ENCODE measurements at regions of chr10 and their contacts with region 1.

Region 1: DNA sequence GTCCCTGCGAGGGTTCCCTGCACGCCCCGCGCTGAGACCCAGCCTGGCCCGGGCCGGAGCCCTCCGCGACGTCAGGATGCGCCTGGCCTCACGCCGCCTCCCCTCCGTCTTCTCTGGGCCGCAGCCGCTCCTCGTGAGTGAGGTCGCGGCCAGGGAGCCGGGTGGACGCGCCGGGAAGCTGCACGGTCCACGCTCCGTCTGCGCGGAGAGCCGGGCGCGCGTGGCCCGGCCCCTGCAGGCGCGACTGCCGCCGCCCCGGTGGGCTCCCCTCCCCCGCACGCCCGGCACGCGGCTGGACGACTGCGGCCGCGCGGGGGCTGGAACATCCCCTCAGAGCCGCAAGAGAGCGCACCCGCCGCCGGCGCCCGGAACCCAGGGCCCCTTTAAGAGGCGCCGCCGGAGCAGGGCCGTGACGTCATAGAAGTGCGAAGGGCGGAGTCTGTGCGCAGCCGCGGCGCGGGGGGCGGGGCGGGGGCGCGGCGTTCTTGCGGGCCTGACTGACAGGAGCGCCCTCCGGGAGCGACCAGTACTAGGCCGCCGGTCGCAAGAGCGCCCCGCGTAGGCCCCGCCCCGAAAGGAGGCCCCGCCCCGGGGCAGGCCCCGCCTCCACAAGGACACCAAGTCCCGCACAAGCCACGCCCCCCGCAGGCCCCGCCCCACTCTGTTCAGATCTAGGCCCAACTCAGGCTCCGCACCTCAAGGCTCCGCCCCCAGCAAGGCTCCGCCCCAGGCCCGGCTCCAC is 445 bp upstream of the INPP5A start:
- DNase-seq: peak; percentile 100
- H3K4me3 ChIP-seq: peak overlapping the region; percentile 84
- H3K27ac ChIP-seq: peak overlapping the region; percentile 75 to 90
- H3K4me1 ChIP-seq: peaks cover 20% of the 10 kb centered on the region
- H3K27me3 ChIP-seq: no peaks in the 10 kb centered on the region
- CTCF ChIP-seq: peak; percentile 34 to 76 (median 76)
- EP300 ChIP-seq: peak; percentile 60
- POLR2A ChIP-seq: peak; percentile 62

Region 2: DNA sequence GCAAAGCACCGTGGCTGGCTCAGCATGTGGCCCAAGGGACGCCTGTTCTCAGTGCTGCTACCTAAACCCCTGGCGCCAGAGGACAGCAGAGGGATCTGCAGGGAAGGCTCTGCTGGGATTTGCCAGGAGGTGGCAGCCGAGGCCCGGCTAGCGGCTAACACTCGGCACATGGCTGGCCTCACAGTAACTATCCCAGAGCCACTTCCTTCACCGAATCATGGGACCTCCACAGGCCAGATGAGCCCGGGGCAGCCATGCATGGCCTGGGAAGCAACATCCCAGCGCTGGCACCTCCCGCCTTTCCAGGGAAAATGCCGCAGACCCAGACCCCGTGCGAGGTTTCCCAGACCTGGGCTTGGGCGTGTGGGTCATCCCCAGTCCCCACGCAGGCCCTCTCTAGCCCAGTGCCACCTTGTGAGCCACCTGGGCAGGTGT is 314.0 kb before region 1 on chr10:
- intact Hi-C with region 1: loop called in 1 of 4 experiments (anchors 10 kb)
- DNase-seq: peak; percentile 68 to 85 (median 81)
- H3K4me3 ChIP-seq: no peak overlapping the region
- H3K27ac ChIP-seq: no peak overlapping the region
- H3K4me1 ChIP-seq: no peaks in the 10 kb centered on the region
- H3K27me3 ChIP-seq: no peaks in the 10 kb centered on the region
- CTCF ChIP-seq: peak; percentile 82 to 91 (median 84)
- EP300 ChIP-seq: no peak
- POLR2A ChIP-seq: no peak

Region 3: DNA sequence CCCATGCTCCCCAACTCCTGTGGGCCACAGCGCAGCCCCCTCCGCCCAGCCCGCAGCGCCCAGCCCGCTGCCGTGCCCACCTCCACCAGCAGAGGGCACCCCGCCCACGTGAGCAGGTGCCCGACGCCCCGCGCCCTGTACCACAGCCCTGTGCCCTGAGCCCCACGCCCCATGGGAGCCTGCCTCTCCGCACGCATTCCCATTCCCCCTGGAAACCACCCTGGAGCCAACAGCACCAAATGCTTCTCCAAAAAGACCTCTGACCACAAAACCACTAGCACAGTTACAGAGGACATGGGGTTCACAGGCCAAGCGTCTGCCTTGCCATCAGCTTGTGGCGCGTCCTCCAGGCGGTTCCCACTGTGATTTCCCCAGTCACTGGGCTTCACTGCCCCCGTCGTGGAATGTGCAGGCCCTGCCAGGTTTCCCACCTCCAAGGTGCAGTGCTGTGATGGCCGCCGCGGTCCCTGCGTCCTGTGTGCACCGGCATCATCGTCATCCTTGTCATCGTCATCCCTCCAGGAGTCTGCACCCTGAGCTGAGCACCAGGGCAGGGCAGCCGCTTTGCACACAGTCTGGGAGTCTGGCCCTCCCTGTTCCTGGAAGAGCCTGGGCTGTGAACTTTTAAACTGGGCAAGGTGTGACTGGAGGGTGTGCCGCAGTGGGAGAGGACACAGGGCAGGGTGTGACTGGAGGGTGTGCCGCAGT is 78.4 kb before region 1 on chr10:
- intact Hi-C with region 1: loop called in 3 of 4 experiments (anchors 5 kb)
- DNase-seq: peak; percentile 53 to 82 (median 76)
- H3K4me3 ChIP-seq: no peak overlapping the region
- H3K27ac ChIP-seq: no peak overlapping the region
- H3K4me1 ChIP-seq: peaks cover 3% of the 10 kb centered on the region
- H3K27me3 ChIP-seq: no peaks in the 10 kb centered on the region
- CTCF ChIP-seq: peak; percentile 94 to 98 (median 96)
- EP300 ChIP-seq: no peak
- POLR2A ChIP-seq: peak; percentile 32

Region 4: GRCh38 chr10:132616170-132616995 is 79.2 kb after region 1 on chr10:
- intact Hi-C with region 1: loop called in 2 of 4 experiments (anchors 10 kb)
- DNase-seq: peak in 1 of 5 donors; percentile 18
- H3K4me3 ChIP-seq: no peak overlapping the region
- H3K27ac ChIP-seq: no peak overlapping the region
- H3K4me1 ChIP-seq: peaks cover 12% of the 10 kb centered on the region
- H3K27me3 ChIP-seq: no peaks in the 10 kb centered on the region
- CTCF ChIP-seq: no peak
- EP300 ChIP-seq: no peak
- POLR2A ChIP-seq: no peak

Region 5: DNA sequence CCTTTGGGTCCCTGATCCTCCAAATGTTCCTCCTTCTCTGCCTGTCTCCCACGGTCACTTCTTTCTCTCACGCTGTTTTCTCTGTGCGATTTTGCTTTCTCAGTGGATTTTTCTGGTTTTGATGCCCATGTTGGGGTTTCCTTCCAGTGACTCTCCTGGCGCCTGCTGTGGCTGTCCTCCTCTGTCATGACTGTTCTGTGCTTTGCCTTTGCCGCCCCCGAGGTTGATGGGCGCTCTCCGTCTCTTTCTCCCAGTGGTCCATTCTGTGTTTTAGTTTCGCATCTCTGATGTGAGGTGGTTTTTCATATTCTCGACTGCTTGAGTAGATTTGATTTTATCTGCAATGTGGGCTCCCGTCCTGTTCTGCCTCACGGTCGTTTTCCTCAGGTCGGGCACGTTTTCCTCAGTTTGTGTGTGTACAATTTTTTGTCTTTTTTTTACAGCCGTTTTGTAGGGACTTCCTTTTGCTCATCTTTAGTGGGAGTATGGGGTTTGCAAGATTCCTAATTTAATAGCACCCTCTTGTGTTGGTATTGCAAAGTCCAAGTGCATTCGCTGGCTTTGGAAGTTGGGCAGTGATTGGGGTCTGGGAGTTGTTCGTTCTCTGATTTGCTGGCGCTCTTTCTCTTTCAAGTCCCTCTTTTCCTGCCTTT is 100.5 kb after region 1 on chr10:
- intact Hi-C with region 1: loop called in 3 of 4 experiments (anchors 5 kb)
- DNase-seq: peak in 4 of 5 donors; percentile 24 to 36 (median 32)
- H3K4me3 ChIP-seq: no peak overlapping the region
- H3K27ac ChIP-seq: no peak overlapping the region
- H3K4me1 ChIP-seq: peaks cover 6% of the 10 kb centered on the region
- H3K27me3 ChIP-seq: no peaks in the 10 kb centered on the region
- CTCF ChIP-seq: peak; percentile 35 to 82 (median 76)
- EP300 ChIP-seq: no peak
- POLR2A ChIP-seq: no peak

Measured in ovary (tissue), 10 donors.